ENCODE measurements at regions of chr12 and their contacts with region 1.

Region 1: GRCh38 chr12:5988659-5989116 is 43.6 kb upstream of the ANO2 start:
- DNase-seq: peak; percentile 70
- H3K4me3 ChIP-seq: no peak overlapping the region
- H3K27ac ChIP-seq: no peak overlapping the region
- H3K4me1 ChIP-seq: peaks cover 5% of the 10 kb centered on the region
- H3K27me3 ChIP-seq: no peaks in the 10 kb centered on the region
- CTCF ChIP-seq: peak; percentile 83 to 95 (median 94)
- POLR2A ChIP-seq: peak; percentile 7

Region 2: GRCh38 chr12:6039894-6040568 is 51.3 kb after region 1 on chr12:
- intact Hi-C with region 1: loop called (anchors 2 kb)
- DNase-seq: peak; percentile 57
- H3K4me3 ChIP-seq: no peak overlapping the region
- H3K27ac ChIP-seq: no peak overlapping the region
- H3K4me1 ChIP-seq: no peaks in the 10 kb centered on the region
- H3K27me3 ChIP-seq: no peaks in the 10 kb centered on the region
- CTCF ChIP-seq: peak; percentile 81 to 93 (median 90)
- POLR2A ChIP-seq: no peak

Region 3: DNA sequence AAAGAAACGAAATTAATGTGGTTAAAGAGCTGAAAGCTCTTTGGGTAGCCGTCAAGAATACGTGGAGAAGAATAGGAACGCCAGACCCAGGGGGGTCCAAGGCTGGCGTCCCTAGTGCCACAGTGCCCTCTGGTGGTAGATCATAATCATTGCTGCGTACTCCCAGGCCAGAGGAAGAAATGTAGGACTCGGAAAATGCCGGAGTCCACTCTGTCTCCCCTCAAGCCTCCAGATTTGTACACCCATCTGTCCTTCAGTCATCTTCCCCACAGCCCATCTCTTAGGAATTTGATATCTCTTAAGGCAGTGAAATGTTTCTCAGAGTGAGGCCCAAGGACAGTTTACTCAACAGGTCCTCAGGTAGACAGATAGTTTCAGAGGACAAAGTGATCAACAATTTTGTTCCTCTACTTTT is 296.4 kb after region 1 on chr12:
- intact Hi-C with region 1: loop called (anchors 10 kb)
- DNase-seq: peak; percentile 58
- H3K4me3 ChIP-seq: no peak overlapping the region
- H3K27ac ChIP-seq: no peak overlapping the region
- H3K4me1 ChIP-seq: no peaks in the 10 kb centered on the region
- H3K27me3 ChIP-seq: no peaks in the 10 kb centered on the region
- CTCF ChIP-seq: peak; percentile 92 to 95 (median 94)
- POLR2A ChIP-seq: no peak

Measured in prostate gland (tissue), 2 donors.